Transverse colon (tissue), 4 donors: ENCODE measurements at regions of chr11 and their contacts with region 1.

Region 1: DNA sequence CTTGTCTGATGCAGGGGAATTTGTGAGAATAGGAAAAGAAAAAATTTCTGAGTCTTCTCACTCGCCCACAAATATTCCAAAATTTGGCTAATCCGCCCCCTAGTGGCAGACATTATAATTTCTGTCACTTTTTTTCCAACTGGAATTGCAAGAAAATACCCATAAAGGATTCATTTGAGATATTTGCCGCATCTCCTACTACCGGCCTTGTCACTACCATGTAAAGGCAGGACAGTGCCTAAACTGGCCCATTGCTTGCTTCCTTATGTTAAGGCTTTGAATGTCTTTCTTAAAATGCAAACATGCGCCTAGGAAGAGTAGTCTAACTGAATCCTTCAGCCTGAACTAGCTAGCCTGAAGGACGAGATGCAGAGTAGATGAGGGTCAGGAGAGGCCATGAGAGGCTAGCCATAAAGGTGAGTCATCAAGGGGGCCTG is 9.3 kb upstream of the CEP295 start:
- DNase-seq: no peak
- H3K4me3 ChIP-seq: no peak overlapping the region
- H3K27ac ChIP-seq: no peak overlapping the region
- H3K4me1 ChIP-seq: peaks cover 0 to 2% (median 0%) of the 10 kb centered on the region in 4 donors
- H3K27me3 ChIP-seq: no peaks in the 10 kb centered on the region
- CTCF ChIP-seq: peak; percentile 71 to 85 (median 77)
- EP300 ChIP-seq: no peak
- POLR2A ChIP-seq: no peak

Region 2: GRCh38 chr11:92941676-92942571 is 710.3 kb before region 1 on chr11:
- in situ Hi-C with region 1: loop called in 2 of 4 experiments (anchors 25 kb)
- intact Hi-C with region 1: no loop called
- DNase-seq: no peak
- H3K4me3 ChIP-seq: no peak overlapping the region
- H3K27ac ChIP-seq: no peak overlapping the region
- H3K4me1 ChIP-seq: no peaks in the 10 kb centered on the region
- H3K27me3 ChIP-seq: no peaks in the 10 kb centered on the region
- CTCF ChIP-seq: peak; percentile 54 to 70 (median 64)
- EP300 ChIP-seq: no peak
- POLR2A ChIP-seq: no peak

Region 3: DNA sequence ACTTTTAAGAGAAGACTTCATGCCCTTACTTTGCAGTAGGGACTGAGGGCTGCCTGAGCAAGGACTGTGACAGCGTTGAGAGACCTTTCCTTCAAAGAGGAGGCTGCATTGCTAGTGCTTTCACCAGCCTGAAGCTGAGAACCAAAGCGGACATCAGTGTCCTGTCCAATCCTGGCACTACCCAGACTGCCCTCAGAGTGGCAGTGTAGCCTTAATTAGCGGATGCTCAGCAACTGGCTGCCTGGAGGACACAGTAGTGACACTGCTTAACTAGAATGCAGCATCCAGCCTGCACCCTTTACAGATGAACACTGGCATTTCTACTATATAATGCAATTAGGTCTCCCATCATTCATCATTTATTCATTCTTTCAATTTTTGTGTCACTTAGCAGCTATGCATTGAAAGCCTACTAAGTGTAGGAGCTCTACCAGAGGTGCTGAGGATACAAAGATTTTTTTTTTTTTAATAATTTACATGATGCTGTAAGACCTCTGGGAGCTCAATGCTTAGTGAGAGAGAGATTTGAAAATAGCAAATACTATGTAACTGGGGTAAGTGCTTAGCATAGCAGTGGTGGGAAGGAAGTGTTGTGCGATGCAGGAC is 417.5 kb before region 1 on chr11:
- in situ Hi-C with region 1: loop called (anchors 5 to 10 kb)
- intact Hi-C with region 1: loop called (anchors 5 kb)
- DNase-seq: peak; percentile 82
- H3K4me3 ChIP-seq: no peak overlapping the region
- H3K27ac ChIP-seq: no peak overlapping the region
- H3K4me1 ChIP-seq: peaks cover 0 to 15% (median 2%) of the 10 kb centered on the region in 4 donors
- H3K27me3 ChIP-seq: no peaks in the 10 kb centered on the region
- CTCF ChIP-seq: peak; percentile 84 to 88 (median 87)
- EP300 ChIP-seq: no peak
- POLR2A ChIP-seq: no peak

Region 4: DNA sequence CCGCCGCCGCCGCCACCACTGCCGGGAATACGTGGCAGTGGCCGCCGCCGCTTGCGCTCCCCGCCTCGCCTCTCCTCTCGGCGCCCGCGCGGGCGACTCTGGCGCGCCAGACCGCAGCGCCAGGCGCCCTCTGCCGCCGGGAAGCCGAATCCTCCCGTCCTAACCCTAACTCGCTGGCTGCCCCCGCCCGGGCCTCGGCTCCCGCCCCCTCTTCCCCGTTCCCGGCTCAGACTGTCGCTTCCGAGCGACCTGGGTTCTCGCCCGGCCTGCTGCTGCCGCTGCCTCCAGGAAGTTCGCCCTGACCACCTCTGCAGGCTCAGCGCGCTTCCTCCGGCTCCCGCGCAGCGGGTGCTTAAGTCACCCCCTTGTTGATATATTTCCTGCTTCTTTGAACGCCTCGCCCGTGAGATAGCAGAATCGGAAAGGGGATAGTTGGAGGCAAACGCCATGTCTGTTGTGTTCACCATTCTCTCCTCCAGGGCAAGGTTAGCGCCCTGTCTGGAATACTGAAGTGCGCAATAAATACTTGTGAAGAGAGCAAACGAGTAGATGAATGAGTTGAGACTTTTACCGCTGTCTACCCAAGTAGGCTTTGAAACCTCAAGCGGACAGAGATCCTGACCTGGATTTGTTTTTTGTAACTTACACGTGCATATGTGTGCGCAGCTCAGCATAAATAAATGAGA is 108.7 kb before region 1 on chr11 and contains the start of gene SMCO4:
- in situ Hi-C with region 1: loop called in 1 of 4 experiments (anchors 25 kb)
- intact Hi-C with region 1: loop called (anchors 5 kb)
- DNase-seq: peak; percentile 89
- H3K4me3 ChIP-seq: peak within 1 kb of the TSS; percentile 52 to 96 (median 66)
- H3K27ac ChIP-seq: peak within 1 kb of the TSS; percentile 77 to 93 (median 78)
- H3K4me1 ChIP-seq: peaks cover 0 to 23% (median 11%) of the 10 kb centered on the region in 4 donors
- H3K27me3 ChIP-seq: no peaks in the 10 kb centered on the region
- CTCF ChIP-seq: peak; percentile 63 to 78 (median 66)
- EP300 ChIP-seq: no peak
- POLR2A ChIP-seq: peak; percentile 28
- total RNA-seq, gene SMCO4: 33.3 to 80.4 (median 37.0) TPM in 3 of 4 donors, not detected in the other